ENCODE measurements at regions of chr2 and their contacts with region 1.

Region 1: GRCh38 chr2:24084386-24085361 is at the start of gene TP53I3:
- DNase-seq: peak; percentile 97
- total RNA-seq, gene TP53I3: 9.8 to 23.5 TPM

Region 2: GRCh38 chr2:23926750-23927571 is 157.7 kb before region 1 on chr2 and contains the start of gene ATAD2B:
- intact Hi-C with region 1: loop called in 1 of 2 experiments (anchors 10 kb)
- DNase-seq: peak; percentile 97
- total RNA-seq, gene ATAD2B: 21.8 to 28.8 TPM

Region 3: DNA sequence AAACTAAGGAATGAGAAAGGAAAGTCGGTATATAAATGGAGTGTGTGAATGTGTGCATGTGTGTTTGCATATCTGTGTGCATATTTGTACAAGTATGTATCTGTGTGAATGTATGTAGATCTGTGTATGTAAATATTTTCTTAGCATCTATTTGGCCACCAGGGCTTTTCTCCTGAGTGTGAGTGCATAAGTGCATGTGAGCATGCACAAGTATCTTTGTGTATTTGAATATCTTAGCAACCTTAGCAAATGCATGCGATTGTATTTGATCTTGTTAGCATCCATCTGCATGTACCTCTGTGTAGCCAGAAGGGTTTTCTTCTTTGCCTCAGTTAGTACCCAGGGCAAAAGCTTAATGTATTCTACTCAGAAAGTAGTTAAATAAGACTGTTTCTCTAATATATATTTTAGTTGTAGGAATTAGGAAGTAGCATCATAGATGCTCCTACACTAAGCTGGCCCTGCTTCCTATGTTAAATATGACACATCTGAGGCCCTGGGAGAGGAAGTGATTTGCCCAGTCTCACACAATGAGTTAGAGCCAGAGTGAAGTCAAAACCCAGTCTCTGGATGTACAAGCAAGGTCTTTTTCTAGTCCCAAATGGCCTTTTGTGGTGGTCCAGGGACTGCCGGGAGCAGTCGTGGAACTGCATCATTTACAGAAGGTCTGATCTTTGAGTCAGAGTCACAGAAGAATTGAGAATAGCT is 26.0 kb before region 1 on chr2:
- intact Hi-C with region 1: no loop called
- DNase-seq: no peak